Mammary epithelial cell (primary cell): ENCODE measurements at regions of chr14 and their contacts with region 1.

Region 1: GRCh38 chr14:79809849-79810612 is 401.3 kb downstream of the DIO2 start:
- DNase-seq: no peak
- H3K4me3 ChIP-seq: no peak overlapping the region
- H3K27ac ChIP-seq: no peak overlapping the region
- H3K4me1 ChIP-seq: no peaks in the 10 kb centered on the region
- H3K27me3 ChIP-seq: no peaks in the 10 kb centered on the region
- CTCF ChIP-seq: peak in 1 of 2 donors; percentile 21

Region 2: GRCh38 chr14:79584679-79585078 is 225.4 kb before region 1 on chr14:
- CTCF ChIA-PET with region 1: interaction called, 10 read pairs
- dilution Hi-C with region 1: no loop called
- in situ Hi-C with region 1: no loop called
- intact Hi-C with region 1: no loop called
- DNase-seq: peak; percentile 61
- H3K4me3 ChIP-seq: no peak overlapping the region
- H3K27ac ChIP-seq: peak overlapping the region; percentile 44
- H3K4me1 ChIP-seq: peaks cover 3% of the 10 kb centered on the region
- H3K27me3 ChIP-seq: no peaks in the 10 kb centered on the region
- CTCF ChIP-seq: peak in 1 of 2 donors; percentile 26

Region 3: DNA sequence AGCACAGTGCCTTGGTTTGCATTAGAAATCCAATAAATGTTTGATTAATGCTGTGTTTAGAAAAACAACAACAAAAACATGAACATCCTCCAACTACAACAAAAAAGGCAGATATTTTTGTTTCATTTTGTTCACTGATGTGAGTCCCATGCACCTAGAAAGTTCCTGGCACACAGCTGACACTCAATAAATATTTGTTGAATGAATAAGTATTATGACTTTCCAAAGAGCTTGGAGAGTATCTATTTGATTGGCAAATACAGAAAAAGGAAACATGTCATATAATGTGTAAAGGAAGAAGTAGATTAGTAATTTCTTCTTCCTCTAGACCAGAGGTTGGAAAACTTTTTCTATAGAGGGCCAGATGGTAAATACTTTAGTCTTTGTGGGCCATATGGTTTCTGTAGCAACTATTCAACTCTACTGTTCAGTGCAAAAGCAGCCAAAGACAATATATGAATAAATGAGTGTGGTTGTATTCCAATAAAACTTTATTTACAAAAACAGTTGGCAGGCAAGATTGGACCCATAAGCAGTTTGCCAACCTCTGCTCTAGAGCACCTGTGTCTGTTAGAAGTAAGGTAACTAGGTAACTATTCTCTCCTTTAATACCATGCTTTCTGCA is 713.6 kb after region 1 on chr14:
- CTCF ChIA-PET with region 1: no interaction called
- dilution Hi-C with region 1: no loop called
- in situ Hi-C with region 1: no loop called
- intact Hi-C with region 1: no loop called
- DNase-seq: peak; percentile 8
- H3K4me3 ChIP-seq: no peak overlapping the region
- H3K27ac ChIP-seq: no peak overlapping the region
- H3K4me1 ChIP-seq: no peaks in the 10 kb centered on the region
- H3K27me3 ChIP-seq: no peaks in the 10 kb centered on the region
- CTCF ChIP-seq: no peak